Upper lobe of right lung (tissue), 1 donor: ENCODE measurements at regions of chr17 and their contacts with region 1.

Region 1: GRCh38 chr17:75173526-75173925 is 9.2 kb downstream of the SUMO2 start:
- DNase-seq: no peak
- ATAC-seq: no peak
- H3K4me3 ChIP-seq: no peak overlapping the region
- H3K27ac ChIP-seq: peak overlapping the region; percentile 6
- H3K4me1 ChIP-seq: peaks cover 4% of the 10 kb centered on the region
- H3K27me3 ChIP-seq: no peaks in the 10 kb centered on the region
- CTCF ChIP-seq: no peak

Region 2: GRCh38 chr17:75059369-75060345 is 113.9 kb before region 1 on chr17:
- intact Hi-C with region 1: loop called (anchors 10 kb)
- DNase-seq: no peak
- ATAC-seq: peak; percentile 85
- H3K4me3 ChIP-seq: no peak overlapping the region
- H3K27ac ChIP-seq: peak overlapping the region; percentile 55
- H3K4me1 ChIP-seq: peaks cover 11% of the 10 kb centered on the region
- H3K27me3 ChIP-seq: no peaks in the 10 kb centered on the region
- CTCF ChIP-seq: peak; percentile 50

Region 3: GRCh38 chr17:75109407-75110233 is 63.9 kb before region 1 on chr17 and contains the start of gene ARMC7:
- intact Hi-C with region 1: loop called (anchors 5 kb)
- DNase-seq: peak; percentile 97
- ATAC-seq: peak; percentile 87
- H3K4me3 ChIP-seq: peak within 1 kb of the TSS; percentile 98
- H3K27ac ChIP-seq: peak within 1 kb of the TSS; percentile 92
- H3K4me1 ChIP-seq: peaks cover 35% of the 10 kb centered on the region
- H3K27me3 ChIP-seq: no peaks in the 10 kb centered on the region
- CTCF ChIP-seq: no peak
- total RNA-seq, gene ARMC7: 18.0 TPM

Region 4: GRCh38 chr17:75535119-75535537 is 361.6 kb after region 1 on chr17:
- intact Hi-C with region 1: no loop called
- DNase-seq: no peak
- ATAC-seq: peak; percentile 15
- H3K4me3 ChIP-seq: no peak overlapping the region
- H3K27ac ChIP-seq: peak overlapping the region; percentile 51
- H3K4me1 ChIP-seq: peaks cover 13% of the 10 kb centered on the region
- H3K27me3 ChIP-seq: no peaks in the 10 kb centered on the region
- CTCF ChIP-seq: no peak